ENCODE measurements at regions of chr12 and their contacts with region 1.

Region 1: GRCh38 chr12:43338848-43339526 is 213.0 kb downstream of the ADAMTS20 start:
- DNase-seq: no peak
- ATAC-seq: peak; percentile 100

Region 2: DNA sequence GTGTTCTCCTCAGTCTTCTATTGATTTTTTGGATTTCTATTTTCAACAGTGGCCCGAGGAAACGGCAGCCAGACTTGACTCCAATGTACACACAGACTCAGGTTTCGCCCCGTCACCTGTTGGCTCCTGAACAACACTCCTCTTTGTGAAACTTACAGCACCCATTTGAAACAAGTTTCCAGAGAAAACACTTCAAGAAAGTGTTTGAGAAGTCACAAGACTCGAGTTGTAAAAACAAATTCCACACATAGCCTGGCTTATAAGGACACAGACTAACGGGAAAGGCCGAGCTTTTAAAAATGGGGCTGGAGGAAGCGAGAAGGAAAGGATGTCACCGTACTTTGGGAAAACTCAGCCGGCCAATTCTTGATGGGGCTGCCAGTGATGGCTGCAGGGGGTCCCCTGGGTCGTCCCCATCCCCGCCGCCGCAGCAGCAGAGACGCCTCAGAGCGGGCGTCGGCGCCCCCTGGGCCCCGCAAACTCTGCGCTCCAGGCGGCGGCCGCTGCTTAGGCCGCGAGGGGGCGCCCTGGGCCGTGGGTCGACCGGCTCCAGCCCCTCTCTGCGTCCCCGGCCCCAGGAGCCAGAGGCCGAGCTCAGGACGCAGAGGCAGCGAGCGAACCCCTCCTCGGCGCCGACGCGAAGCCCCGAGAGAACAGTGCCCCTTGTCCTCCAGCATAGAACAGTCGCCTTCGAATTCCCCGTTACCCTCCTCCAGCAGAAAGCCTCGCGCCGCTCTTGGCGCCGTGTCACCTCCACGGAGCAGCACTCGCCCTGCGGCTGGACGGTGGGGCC is 856.3 kb before region 1 on chr12:
- intact Hi-C with region 1: loop called (anchors 10 kb)
- DNase-seq: peak; percentile 91
- ATAC-seq: peak; percentile 85

Region 3: DNA sequence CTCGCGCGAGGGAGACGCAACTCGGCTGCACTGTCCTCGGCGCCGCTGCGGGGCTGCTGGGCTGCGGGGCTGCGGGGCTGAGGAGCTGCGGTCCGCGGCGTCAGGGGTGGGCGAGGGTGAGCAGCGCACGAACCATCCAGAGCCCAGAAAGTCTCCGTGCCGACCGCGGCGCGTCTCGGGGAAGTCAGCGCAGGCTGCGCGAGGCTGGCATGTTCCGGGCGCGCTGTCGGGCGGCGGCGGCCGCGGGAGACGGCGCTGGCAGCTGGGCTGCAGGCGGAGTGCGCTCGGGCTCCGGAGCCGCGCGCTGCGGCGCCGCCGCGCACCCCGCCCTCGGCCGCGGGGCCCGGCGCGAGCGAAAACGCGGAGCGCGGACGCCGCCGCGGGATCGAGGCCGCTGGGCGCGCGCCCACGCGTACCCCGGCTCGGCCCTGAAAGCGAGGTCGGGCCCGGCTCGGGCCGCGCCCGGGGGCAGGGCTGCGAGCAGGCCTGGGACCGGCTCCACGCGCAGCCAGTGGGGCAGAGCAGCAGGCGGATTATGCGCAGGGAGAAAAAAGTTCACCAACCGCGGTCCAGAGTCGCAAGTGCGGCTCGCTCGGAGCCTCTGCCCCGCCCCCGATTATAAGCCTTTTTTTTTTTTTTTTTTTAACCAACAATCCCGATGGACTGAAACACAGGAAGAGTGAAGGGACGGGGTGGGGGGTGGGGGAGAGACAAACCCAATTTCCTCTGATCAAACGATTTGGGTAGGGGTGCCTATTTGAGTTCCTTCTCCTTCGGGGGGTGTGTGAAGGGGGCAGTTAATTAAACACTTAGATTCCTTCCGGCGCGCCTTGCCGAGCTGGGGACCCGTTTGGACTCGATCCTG is 749.3 kb before region 1 on chr12 and contains the start of gene PRICKLE1:
- intact Hi-C with region 1: loop called (anchors 5 kb)
- DNase-seq: peak; percentile 73
- ATAC-seq: peak; percentile 87
- total RNA-seq, gene PRICKLE1: 17.7 TPM

Region 4: DNA sequence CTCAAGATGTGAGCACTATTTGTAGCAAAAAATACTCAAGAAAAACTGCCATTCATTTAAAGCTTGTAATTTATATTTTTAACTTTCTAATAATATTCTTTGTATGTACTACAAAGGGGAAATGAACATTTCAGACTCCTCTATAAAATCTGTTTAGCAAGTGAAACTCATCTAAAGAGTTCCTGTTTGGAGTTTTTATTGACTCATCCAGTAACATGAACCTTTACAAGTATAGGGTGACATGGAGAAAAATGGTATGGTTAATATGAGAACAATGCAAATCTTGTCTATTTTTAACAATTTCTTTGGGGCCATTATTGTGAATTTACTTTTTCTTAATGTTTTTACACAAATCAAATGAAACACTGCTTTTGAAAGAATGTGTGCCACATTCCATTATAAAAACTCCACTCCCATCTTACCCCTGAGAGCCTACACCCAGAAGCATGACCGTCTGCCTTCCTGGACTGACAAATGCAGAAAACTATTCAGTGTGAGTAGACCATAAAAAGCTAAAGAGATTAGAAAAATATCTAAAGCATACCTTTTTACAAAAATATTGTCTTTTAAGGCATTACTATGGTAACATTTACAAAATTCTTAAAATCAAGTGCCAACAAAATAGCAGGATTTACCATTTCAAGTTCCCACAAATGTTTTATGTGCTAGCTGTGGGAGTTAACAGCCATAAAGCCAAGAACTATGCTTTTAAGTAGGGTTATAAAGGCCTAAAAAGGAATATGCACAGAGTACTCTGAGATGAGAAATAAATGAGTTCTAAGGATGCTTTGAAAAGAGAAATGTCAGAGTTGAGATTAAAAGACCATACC is 69.0 kb after region 1 on chr12:
- intact Hi-C with region 1: no loop called
- DNase-seq: no peak
- ATAC-seq: no peak